WTC11 (cell line): ENCODE measurements at regions of chr1 and their contacts with region 1.

Region 1: DNA sequence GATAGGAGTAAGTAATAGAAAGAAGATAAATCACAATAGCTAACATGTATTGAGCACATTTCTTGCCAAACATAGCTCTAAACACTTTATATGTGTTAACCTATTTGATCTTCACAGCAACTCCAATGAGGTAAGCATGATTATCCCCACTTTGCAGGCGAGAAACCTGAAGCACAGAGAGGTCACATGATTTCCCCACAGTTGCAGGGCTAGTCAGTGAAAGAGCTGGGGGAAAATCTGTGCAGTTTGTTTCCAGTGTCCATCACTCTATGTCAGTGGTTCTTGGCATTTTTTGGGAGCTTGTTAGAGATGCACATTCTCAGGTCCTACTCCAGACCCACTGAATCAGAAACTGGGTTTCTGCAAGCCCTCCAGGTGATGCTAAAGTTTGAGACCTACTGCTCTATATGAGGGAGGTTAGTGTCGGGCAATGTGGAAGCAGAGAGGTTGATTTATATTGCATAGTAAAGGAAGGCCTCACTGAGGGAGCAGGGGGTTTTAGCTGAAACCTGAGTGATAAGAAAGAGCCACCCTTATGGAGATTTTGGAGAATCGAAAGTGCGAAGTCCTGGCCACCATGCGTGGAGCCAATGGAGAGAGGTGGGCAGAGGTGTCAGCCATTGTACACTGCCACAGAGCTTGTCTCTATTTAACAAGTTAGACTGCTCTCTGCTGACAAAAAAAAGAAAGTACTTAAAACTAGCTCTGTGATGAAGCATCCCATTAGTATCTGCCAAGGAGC is 20.9 kb downstream of the MCOLN3 start:
- DNase-seq: no peak
- ATAC-seq: peak; percentile 72
- H3K4me3 Mint-ChIP-seq: no peak overlapping the region
- H3K27ac Mint-ChIP-seq: no peak overlapping the region
- H3K4me1 Mint-ChIP-seq: no peaks in the 10 kb centered on the region
- H3K27me3 Mint-ChIP-seq: no peaks in the 10 kb centered on the region
- CTCF ChIP-seq: no peak

Region 2: GRCh38 chr1:84996846-84997666 is 30.4 kb before region 1 on chr1 and contains the start of gene MCOLN2:
- CTCF ChIA-PET with region 1: interaction called, 10 read pairs
- POLR2A ChIA-PET with region 1: no interaction called
- DNase-seq: peak; percentile 67
- ATAC-seq: peak; percentile 84
- H3K4me3 Mint-ChIP-seq: peak within 1 kb of the TSS; percentile 81
- H3K27ac Mint-ChIP-seq: no peak within 1 kb of the TSS
- H3K4me1 Mint-ChIP-seq: peaks cover 17% of the 10 kb centered on the region
- H3K27me3 Mint-ChIP-seq: peaks cover 76% of the 10 kb centered on the region
- CTCF ChIP-seq: no peak
- total RNA-seq, gene MCOLN2: 3.8 to 5.4 TPM (median 4.8 TPM) in 3 replicates